ENCODE measurements at regions of chr9 and their contacts with region 1.

Region 1: DNA sequence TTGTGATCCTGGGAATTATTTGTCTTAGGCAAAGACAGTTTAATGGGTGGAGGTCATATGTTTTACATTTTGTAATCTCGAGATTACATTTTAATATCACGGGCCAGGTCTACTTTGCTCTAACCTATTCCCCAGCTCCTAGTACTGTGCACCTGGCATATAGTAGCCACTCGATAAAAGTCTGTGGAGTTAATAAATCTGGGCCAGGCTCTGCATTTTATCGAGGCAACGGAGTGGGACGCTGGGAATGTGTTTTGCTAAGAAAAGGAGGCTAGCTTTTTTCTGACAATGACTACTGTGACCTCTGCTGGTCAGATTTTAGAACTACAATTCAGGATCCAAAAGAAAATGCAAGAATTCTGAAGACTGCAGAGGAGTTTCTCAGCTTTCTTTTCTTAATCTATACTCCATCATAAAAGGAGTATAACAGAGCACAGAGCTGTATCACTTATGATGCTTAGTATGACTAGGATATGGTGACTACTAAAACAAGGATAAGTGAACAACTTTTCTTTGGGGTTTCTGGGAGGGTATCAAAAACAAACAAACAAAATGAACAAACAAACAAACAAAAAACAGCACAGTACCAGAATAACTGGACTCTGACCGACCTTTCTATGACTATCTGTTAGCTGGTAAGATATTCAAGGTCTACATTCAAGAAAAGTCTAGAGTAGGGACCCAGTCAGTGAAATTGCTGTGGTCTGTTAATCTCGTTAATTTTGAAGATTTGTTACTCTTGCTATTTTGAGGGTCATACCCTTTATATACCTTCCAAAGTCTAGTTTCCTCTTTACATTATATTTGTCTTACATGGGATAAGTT is 46.1 kb upstream of the CER1 start:
- DNase-seq: no peak
- H3K4me3 Mint-ChIP-seq: no peak overlapping the region
- H3K27ac Mint-ChIP-seq: no peak overlapping the region
- H3K4me1 Mint-ChIP-seq: no peaks in the 10 kb centered on the region
- H3K27me3 Mint-ChIP-seq: peaks cover 6% of the 10 kb centered on the region

Region 2: DNA sequence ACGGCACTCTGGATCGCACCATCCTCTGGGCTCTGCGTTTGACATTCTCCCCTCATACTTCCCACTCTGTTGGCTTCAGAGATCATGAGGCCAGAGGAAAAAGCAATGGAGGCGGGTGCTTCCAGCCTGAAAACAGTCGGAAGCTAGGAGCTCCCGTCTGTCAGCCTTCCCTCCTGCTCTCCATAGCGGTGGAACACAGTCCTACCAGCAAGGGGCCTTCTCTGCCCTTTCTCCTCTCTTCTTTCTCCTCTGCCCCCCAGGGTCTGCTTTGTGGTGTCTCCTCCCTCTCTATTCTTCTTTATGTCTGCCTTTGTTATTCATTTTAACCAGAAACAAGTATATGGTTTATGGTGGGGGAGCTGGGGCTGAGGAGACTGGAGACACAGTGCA is 302.2 kb before region 1 on chr9:
- intact Hi-C with region 1: loop called (anchors 5 kb)
- DNase-seq: no peak
- H3K4me3 Mint-ChIP-seq: no peak overlapping the region
- H3K27ac Mint-ChIP-seq: no peak overlapping the region
- H3K4me1 Mint-ChIP-seq: no peaks in the 10 kb centered on the region
- H3K27me3 Mint-ChIP-seq: no peaks in the 10 kb centered on the region

Region 3: DNA sequence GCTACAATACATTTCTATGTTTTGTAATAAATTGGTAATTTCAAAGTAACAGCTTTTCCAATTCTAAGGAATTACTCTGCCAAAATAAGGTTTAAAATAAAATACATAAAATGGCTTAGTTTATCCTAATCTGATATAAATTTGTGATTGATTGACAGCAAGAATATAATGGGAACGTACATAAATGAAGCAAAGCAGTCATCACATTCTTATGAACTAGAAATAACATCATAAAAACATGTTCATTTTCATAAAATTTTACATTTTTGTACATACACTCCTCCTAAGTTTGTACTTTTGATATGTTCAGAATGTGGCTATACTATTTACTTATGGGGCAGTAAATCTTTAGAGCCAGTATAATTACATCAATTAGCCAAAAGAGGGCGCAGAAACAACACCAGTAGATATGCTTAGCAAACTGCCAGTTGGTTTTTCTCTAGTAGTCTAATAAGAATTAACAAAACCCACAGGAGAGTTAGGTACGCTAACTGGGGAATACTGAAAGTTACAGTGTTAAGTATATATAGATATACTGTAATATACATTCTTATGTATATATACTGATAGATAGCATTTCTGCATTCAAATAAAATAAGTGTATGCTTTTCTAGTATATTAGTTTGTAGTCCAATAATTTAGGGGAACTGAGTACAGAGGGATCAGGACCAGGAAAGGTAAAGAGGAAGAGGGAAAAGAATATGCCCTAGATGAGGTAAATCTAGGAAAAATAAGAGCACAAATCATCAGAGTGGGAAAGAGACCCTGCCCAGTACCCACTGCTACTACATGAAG is 152.2 kb before region 1 on chr9:
- intact Hi-C with region 1: loop called (anchors 1 kb)
- DNase-seq: no peak
- H3K4me3 Mint-ChIP-seq: no peak overlapping the region
- H3K27ac Mint-ChIP-seq: no peak overlapping the region
- H3K4me1 Mint-ChIP-seq: no peaks in the 10 kb centered on the region
- H3K27me3 Mint-ChIP-seq: no peaks in the 10 kb centered on the region

Region 4: GRCh38 chr9:14752271-14752670 is 16.3 kb before region 1 on chr9:
- intact Hi-C with region 1: no loop called
- DNase-seq: no peak
- H3K4me3 Mint-ChIP-seq: no peak overlapping the region
- H3K27ac Mint-ChIP-seq: no peak overlapping the region
- H3K4me1 Mint-ChIP-seq: peaks cover 4% of the 10 kb centered on the region
- H3K27me3 Mint-ChIP-seq: peaks cover 19% of the 10 kb centered on the region